ENCODE measurements at regions of chr10 and their contacts with region 1.

Region 1: GRCh38 chr10:80382989-80383388 is 25.4 kb upstream of the PRXL2A start:
- DNase-seq: peak; percentile 73
- ATAC-seq: peak; percentile 53
- H3K4me3 Mint-ChIP-seq: no peak overlapping the region
- H3K27ac Mint-ChIP-seq: no peak overlapping the region
- H3K4me1 Mint-ChIP-seq: peaks cover 15% of the 10 kb centered on the region
- H3K27me3 Mint-ChIP-seq: no peaks in the 10 kb centered on the region

Region 2: DNA sequence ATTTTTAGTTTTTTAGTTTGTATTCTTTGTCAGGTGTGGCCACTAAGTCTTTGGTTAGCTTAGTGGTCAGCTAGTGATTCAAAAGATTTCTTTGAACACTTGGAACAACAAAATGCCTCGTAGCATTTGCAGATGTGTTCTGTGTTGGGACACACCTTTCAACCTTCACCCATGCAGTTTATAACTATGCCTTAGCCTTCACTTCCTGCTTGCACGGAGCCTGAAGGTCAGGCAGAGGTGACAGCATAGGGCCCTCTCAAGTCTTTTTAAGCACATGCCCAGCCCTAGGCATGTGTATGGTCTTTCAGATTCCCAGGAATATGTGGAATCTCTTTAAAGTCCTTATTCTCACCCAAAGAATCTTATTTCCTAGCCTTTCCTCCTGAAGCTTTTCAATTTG is 232.8 kb before region 1 on chr10:
- CTCF ChIA-PET with region 1: no interaction called
- POLR2A ChIA-PET with region 1: interaction called, 11 read pairs
- intact Hi-C with region 1: no loop called
- DNase-seq: no peak
- ATAC-seq: no peak
- H3K4me3 Mint-ChIP-seq: no peak overlapping the region
- H3K27ac Mint-ChIP-seq: peak overlapping the region; percentile 67
- H3K4me1 Mint-ChIP-seq: no peaks in the 10 kb centered on the region
- H3K27me3 Mint-ChIP-seq: no peaks in the 10 kb centered on the region

Region 3: GRCh38 chr10:80504158-80504811 is 121.3 kb after region 1 on chr10:
- CTCF ChIA-PET with region 1: interaction called, 61 read pairs
- POLR2A ChIA-PET with region 1: interaction called, 3 read pairs
- intact Hi-C with region 1: loop called (anchors 1 kb)
- DNase-seq: no peak
- ATAC-seq: no peak
- H3K4me3 Mint-ChIP-seq: no peak overlapping the region
- H3K27ac Mint-ChIP-seq: peak overlapping the region; percentile 98
- H3K4me1 Mint-ChIP-seq: peaks cover 65% of the 10 kb centered on the region
- H3K27me3 Mint-ChIP-seq: no peaks in the 10 kb centered on the region

Region 4: GRCh38 chr10:80530251-80530650 is 147.3 kb after region 1 on chr10:
- CTCF ChIA-PET with region 1: interaction called, 12 read pairs
- POLR2A ChIA-PET with region 1: no interaction called
- intact Hi-C with region 1: loop called (anchors 1 to 5 kb)
- DNase-seq: peak; percentile 81
- ATAC-seq: peak; percentile 92
- H3K4me3 Mint-ChIP-seq: no peak overlapping the region
- H3K27ac Mint-ChIP-seq: peak overlapping the region; percentile 61
- H3K4me1 Mint-ChIP-seq: peaks cover 66% of the 10 kb centered on the region
- H3K27me3 Mint-ChIP-seq: no peaks in the 10 kb centered on the region

Region 5: DNA sequence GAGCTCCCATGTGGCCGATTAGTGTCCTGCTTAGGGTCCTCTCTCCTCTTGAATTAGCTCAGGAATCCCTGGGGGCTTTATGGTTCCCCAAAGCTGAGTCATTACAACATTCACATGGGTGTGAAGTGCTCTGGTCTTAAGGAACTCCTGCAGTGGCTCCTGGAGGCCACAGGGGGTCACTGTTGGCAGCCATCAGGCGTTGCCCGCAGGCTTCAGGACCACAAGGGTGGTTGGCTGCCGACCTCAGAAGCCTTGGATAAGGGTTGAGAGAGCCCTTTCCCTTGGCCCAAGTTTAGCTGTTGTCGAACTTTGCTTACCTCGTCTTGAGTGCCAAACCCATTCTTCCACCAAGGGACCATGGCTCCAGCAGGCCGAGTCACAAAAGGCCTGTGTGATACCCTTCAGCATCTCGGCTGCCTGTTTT is 216.4 kb after region 1 on chr10:
- CTCF ChIA-PET with region 1: interaction called, 12 read pairs
- POLR2A ChIA-PET with region 1: no interaction called
- intact Hi-C with region 1: loop called (anchors 5 kb)
- DNase-seq: peak; percentile 64
- ATAC-seq: peak; percentile 80
- H3K4me3 Mint-ChIP-seq: no peak overlapping the region
- H3K27ac Mint-ChIP-seq: no peak overlapping the region
- H3K4me1 Mint-ChIP-seq: no peaks in the 10 kb centered on the region
- H3K27me3 Mint-ChIP-seq: no peaks in the 10 kb centered on the region

Region 6: GRCh38 chr10:80924063-80924952 is 541.3 kb after region 1 on chr10:
- CTCF ChIA-PET with region 1: no interaction called
- POLR2A ChIA-PET with region 1: no interaction called
- intact Hi-C with region 1: loop called (anchors 1 to 10 kb)
- DNase-seq: peak; percentile 44
- ATAC-seq: no peak
- H3K4me3 Mint-ChIP-seq: no peak overlapping the region
- H3K27ac Mint-ChIP-seq: no peak overlapping the region
- H3K4me1 Mint-ChIP-seq: no peaks in the 10 kb centered on the region
- H3K27me3 Mint-ChIP-seq: peaks cover 7% of the 10 kb centered on the region

Region 7: DNA sequence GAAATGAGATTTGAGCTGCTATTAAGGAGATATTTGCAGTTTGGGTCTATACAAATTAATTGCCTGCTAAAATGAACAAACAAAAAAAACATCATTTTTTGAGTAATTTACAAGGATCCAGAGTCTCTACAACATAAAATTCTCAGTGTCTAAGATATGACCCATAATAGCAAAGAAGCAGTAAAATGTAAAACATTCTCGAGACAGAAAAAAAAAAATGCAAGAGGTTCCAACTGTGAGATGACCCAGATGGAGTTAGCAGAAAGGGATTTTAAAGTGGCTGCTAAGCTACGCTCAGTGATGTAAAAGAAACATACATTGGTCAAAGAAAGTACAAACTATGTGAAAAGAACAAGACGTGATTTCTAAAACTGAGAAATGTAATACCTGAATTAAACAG is 625.7 kb after region 1 on chr10:
- CTCF ChIA-PET with region 1: no interaction called
- POLR2A ChIA-PET with region 1: no interaction called
- intact Hi-C with region 1: no loop called
- DNase-seq: no peak
- ATAC-seq: no peak
- H3K4me3 Mint-ChIP-seq: no peak overlapping the region
- H3K27ac Mint-ChIP-seq: no peak overlapping the region
- H3K4me1 Mint-ChIP-seq: no peaks in the 10 kb centered on the region
- H3K27me3 Mint-ChIP-seq: peaks cover 8% of the 10 kb centered on the region